G401 (cell line): ENCODE measurements at regions of chr1 and their contacts with region 1.

Region 1: DNA sequence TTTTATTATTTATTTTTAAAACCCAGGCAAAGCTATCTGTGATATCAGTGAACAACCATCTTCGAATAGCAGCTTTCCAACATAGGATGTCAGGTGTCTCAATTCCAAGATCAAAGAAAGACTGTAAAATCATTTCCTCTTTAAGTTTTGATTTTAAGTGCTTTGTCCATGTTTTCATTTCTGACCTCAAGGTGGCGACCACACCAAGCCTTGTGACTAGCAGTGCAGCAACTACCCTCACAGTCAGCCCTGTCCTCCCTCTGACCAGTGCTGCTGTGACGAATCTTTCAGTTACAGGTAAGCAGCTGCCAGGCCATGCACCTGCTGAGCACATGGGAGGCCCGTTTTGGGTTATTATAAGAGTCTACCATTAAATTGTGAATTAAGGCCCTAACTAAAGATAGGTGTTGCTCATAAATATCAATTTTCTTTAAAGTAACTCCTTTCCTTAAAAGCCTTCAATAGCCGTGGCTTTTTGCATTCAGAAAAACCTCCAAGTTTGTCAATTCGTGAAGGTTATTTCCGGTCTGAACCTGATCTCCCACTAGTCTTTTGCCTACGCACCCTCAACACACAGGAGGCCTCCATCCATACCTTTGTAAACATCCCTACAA is 117.0 kb downstream of the CD247 start:
- DNase-seq: peak; percentile 74

Region 2: GRCh38 chr1:167066333-167067122 is 334.8 kb before region 1 on chr1:
- in situ Hi-C with region 1: loop called (anchors 25 kb)
- DNase-seq: peak; percentile 79

Region 3: DNA sequence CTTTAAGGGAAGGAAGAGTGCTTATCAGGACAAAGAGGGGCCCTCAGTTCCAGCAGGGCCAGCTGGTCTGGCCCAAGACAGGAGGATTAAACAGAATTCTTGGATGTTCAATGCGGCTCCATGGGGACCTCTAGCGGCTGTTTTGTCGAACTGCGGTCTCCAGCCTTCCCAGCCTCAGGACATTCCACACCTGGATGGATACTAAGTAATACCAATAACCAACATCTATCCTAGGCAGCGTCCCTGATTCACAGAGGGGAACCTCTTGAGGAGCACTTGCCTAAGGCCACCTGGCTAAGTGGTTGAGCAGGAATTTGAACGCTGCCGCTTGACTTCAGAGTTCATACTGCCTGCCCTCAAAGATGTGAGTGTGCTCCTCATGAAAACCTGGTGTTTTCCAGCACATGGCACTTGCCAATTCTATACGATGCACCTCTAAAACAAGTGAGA is 132.5 kb after region 1 on chr1:
- in situ Hi-C with region 1: loop called (anchors 10 kb)
- DNase-seq: peak; percentile 85